ENCODE measurements at regions of chr12 and their contacts with region 1.

Region 1: GRCh38 chr12:41277116-41277945 is 89.2 kb downstream of the PDZRN4 start:
- DNase-seq: peak; percentile 70
- H3K4me3 ChIP-seq: no peak overlapping the region
- H3K27ac ChIP-seq: no peak overlapping the region
- H3K4me1 ChIP-seq: no peaks in the 10 kb centered on the region
- CTCF ChIP-seq: peak; percentile 91

Region 2: DNA sequence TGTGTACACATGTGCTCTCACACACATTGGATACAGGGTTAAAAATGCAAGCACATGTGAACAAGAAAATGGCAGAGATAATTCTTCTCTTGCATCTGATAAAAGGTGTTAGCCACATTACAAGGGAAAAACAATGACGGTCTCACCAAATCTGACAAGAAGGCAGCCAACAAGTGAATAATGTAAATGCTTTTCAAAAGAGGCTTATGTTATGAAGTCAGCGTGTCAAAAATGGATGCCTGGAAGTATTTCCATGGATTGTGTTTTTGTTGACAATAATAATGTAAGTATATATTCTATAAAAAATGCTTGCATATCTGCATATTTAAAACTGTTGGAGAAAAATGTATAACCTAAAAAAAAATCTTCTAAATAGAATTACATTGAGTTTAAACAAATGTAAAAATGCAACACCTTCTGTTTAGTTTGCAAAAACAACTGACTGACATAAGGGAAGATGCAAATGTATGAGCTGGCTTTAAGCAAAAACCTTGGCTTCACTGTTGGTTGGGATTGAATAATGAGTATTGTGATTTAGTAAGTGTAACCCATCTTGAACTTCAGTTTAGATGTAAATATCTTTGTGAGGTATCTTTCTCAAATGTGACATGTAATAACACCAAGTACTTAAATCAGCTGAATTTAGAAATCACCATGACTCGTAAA is 335.7 kb after region 1 on chr12:
- CTCF ChIA-PET with region 1: no interaction called
- POLR2A ChIA-PET with region 1: no interaction called
- intact Hi-C with region 1: loop called (anchors 5 kb)
- DNase-seq: no peak
- H3K4me3 ChIP-seq: no peak overlapping the region
- H3K27ac ChIP-seq: no peak overlapping the region
- H3K4me1 ChIP-seq: no peaks in the 10 kb centered on the region
- CTCF ChIP-seq: no peak

Region 3: GRCh38 chr12:42104087-42104486 is 826.8 kb after region 1 on chr12:
- CTCF ChIA-PET with region 1: no interaction called
- POLR2A ChIA-PET with region 1: no interaction called
- intact Hi-C with region 1: loop called (anchors 10 kb)
- DNase-seq: no peak
- H3K4me3 ChIP-seq: no peak overlapping the region
- H3K27ac ChIP-seq: no peak overlapping the region
- H3K4me1 ChIP-seq: peaks cover 13% of the 10 kb centered on the region
- CTCF ChIP-seq: peak; percentile 82

Region 4: DNA sequence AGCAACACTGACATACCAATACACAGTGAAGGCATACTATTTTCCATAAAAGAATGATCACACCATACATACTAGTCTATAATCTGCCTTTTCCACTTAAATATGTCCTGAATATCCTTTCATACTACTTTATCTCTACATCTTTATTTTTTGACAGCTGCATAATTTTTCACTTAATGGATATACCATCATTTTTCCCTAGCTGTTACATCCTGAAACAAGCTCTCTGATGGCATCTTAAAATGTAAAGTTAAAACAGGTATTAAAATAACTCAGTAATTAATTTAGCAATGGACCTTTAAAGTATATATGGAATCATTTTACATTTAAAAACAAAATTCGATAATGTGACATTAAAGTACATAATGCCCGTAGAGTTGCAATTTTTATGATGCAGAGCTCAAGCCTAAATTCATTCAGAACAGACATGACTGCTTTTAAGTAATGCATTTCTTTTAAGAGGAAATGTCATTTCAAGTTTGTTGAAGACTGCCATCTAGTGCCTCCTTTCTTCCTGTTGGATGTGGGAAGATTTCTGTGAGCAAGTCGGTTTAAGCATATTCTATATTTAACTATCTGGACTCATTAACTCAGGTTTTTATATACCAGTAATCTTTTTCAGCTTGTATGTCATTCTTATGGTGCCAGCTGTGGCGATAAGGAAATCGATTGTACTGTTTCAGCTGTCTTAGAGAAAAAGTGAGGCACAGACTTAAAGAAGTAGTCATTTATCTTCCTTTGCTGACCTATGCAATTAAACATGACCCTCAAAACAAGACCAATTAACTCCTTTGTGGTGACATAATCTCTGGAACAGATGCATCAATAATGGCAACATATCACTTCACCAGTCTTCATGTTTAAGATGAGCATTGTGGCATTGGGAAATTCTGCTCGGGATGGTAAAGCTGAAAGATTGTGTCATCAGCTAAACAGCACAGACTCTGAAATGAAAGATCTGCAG is 1291.9 kb after region 1 on chr12:
- CTCF ChIA-PET with region 1: no interaction called
- POLR2A ChIA-PET with region 1: no interaction called
- intact Hi-C with region 1: loop called (anchors 10 kb)
- DNase-seq: peak; percentile 63
- H3K4me3 ChIP-seq: no peak overlapping the region
- H3K27ac ChIP-seq: no peak overlapping the region
- H3K4me1 ChIP-seq: no peaks in the 10 kb centered on the region
- CTCF ChIP-seq: peak; percentile 84